ENCODE measurements at regions of chr7 and their contacts with region 1.

Region 1: DNA sequence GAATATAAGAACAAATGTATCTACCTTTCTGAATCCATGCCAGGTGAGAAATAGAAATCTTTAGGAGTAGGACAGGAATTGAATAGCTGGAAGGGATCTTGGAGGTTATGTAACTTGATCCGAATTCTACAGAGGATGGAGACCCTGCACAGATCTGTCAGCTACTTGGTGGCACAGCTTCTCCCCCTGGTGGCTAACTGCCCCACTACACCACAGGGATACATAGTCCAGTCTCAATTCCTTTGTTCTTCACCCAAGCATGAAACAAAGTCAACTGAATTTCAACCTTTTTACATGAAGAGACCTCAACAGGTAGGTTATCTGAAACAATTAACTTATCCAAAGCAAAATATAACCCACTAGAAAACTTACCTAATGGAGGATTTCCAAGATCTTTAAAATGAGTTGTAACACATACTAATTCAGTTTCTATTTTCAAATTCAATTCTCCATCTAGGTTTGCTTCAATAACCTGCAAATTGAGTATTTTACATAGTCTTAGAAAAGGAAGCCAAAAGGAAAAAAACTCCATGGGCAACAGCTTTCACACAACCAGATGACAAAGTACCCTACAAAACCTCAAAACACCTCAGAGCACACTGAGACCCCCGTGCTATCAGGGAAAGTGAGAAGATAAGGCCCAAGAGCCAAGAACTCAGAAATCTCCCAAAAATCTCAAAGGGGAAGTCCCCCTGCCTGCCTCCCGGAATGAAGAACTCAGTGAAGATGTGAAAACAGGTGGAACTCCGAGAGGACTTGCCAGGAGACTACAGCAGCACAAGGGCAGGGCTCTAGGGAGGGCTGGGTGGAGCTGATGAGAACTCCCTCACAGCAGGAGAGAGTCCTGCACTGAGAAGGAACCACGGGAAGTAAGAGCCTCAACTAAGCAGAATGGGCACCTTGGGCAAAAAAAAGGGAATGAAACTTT is 10.3 kb downstream of the HUS1 start:
- DNase-seq: peak; percentile 67
- ATAC-seq: peak; percentile 75
- H3K4me3 Mint-ChIP-seq: no peak overlapping the region
- H3K27ac Mint-ChIP-seq: no peak overlapping the region
- H3K4me1 Mint-ChIP-seq: peaks cover 24% of the 10 kb centered on the region
- H3K27me3 Mint-ChIP-seq: no peaks in the 10 kb centered on the region

Region 2: GRCh38 chr7:47979145-47979831 is 10.2 kb after region 1 on chr7 and contains the start of gene HUS1:
- CTCF ChIA-PET with region 1: interaction called, 11 read pairs
- POLR2A ChIA-PET with region 1: interaction called, 3 read pairs
- DNase-seq: peak; percentile 95
- ATAC-seq: peak; percentile 96
- H3K4me3 Mint-ChIP-seq: peak within 1 kb of the TSS; percentile 87
- H3K27ac Mint-ChIP-seq: peak within 1 kb of the TSS; percentile 98
- H3K4me1 Mint-ChIP-seq: peaks cover 26% of the 10 kb centered on the region
- H3K27me3 Mint-ChIP-seq: no peaks in the 10 kb centered on the region
- total RNA-seq, gene HUS1: 28.9 to 31.6 TPM